MCF 10A (cell line): ENCODE measurements at regions of chr5 and their contacts with region 1.

Region 1: DNA sequence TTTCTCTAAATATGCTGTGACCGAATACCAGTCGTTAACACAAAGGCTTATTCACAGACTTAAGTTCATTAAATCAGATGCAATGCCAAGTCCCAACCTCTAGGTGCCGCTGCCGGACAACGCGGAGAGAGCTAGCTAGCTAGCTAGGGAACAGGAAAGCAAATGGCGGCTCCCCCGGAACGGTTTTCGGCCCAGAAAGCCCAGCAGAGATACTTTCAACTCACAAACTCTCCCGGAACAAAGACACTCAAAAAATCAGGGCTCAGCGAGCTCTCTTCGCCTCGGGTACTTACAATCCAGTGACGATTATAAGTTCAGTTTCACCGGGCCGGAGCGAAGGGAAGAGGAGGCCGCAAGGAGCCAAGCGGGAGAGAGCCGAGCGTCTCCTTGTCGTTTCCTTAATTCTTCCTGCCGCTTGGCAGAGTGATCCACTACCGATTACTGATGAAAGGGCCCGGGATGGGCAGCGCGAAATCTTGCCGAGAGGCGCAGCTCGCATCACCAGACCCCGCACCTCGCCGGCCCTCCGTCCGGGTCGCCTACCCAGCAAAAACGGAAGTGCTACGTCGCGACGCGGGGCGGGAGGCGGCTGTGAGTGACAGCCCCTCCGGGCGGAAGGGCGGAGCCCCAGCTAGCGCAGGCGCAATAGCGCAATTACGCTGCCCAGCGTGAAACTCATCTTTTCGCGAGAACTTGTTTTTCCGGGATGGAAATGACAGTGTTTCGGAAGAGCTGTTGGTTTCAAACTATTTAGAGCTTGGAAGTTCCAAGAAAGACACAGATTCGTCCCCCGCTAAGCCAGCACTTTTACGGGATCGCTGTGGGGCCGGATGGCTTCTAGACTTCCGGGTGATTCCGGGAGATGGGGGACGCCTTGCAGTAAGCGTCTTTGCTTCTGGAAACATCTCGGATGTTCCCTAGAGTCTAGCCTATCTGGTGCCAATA is at the start of gene TAF7:
- DNase-seq: peak; percentile 95
- H3K4me3 Mint-ChIP-seq: peak within 1 kb of the TSS; percentile 99
- H3K27ac Mint-ChIP-seq: peak within 1 kb of the TSS; percentile 100
- H3K4me1 Mint-ChIP-seq: peaks cover 14% of the 10 kb centered on the region
- H3K27me3 Mint-ChIP-seq: no peaks in the 10 kb centered on the region
- CTCF ChIP-seq: peak; percentile 90
- total RNA-seq, gene TAF7: 81.3 and 94.9 TPM in 2 replicates

Region 2: GRCh38 chr5:140806834-140807775 is 513.4 kb before region 1 on chr5 and contains the start of gene PCDHA4:
- CTCF ChIA-PET with region 1: no interaction called
- POLR2A ChIA-PET with region 1: no interaction called
- intact Hi-C with region 1: no loop called
- DNase-seq: peak; percentile 18
- H3K4me3 Mint-ChIP-seq: peak within 1 kb of the TSS; percentile 55
- H3K27ac Mint-ChIP-seq: no peak within 1 kb of the TSS
- H3K4me1 Mint-ChIP-seq: no peaks in the 10 kb centered on the region
- H3K27me3 Mint-ChIP-seq: no peaks in the 10 kb centered on the region
- CTCF ChIP-seq: peak; percentile 38
- total RNA-seq, gene PCDHA4: 0.16 and 0.49 TPM in 2 replicates

Region 3: GRCh38 chr5:141094481-141095262 is 225.8 kb before region 1 on chr5 and contains the start of gene PCDHB2:
- CTCF ChIA-PET with region 1: no interaction called
- POLR2A ChIA-PET with region 1: no interaction called
- intact Hi-C with region 1: no loop called
- DNase-seq: peak; percentile 70
- H3K4me3 Mint-ChIP-seq: peak within 1 kb of the TSS; percentile 74
- H3K27ac Mint-ChIP-seq: peak within 1 kb of the TSS; percentile 89
- H3K4me1 Mint-ChIP-seq: no peaks in the 10 kb centered on the region
- H3K27me3 Mint-ChIP-seq: no peaks in the 10 kb centered on the region
- CTCF ChIP-seq: peak; percentile 58
- total RNA-seq, gene PCDHB2: 2.4 and 2.6 TPM in 2 replicates

Region 4: DNA sequence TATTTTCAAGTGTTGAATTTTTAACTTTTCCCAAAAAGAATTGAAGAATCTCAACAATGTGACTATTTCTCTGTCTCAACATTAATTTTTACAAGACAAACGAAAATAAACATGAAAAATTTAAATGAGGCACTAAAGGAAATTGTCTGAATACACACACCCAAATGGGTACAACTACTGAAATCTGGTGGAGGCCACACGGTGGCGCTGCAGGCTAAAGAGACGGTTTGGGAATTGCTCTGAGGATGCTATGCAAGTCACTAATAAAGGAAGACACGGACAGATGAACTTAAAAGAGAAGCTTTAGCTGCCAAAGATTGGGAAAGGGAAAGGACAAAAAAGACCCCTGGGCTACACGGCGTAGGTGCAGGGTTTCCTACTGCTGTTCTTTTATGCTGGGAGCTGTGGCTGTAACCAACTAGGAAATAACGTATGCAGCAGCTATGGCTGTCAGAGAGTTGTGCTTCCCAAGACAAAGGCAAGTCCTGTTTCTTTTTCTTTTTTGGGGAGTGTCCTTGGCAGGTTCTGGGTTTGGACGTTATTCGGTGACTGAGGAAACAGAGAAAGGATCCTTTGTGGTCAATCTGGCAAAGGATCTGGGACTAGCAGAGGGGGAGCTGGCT is 128.3 kb before region 1 on chr5 and contains the start of gene PCDHB10:
- CTCF ChIA-PET with region 1: interaction called, 10 read pairs
- POLR2A ChIA-PET with region 1: interaction called, 4 read pairs
- intact Hi-C with region 1: no loop called
- DNase-seq: peak; percentile 60
- H3K4me3 Mint-ChIP-seq: peak within 1 kb of the TSS; percentile 81
- H3K27ac Mint-ChIP-seq: no peak within 1 kb of the TSS
- H3K4me1 Mint-ChIP-seq: peaks cover 6% of the 10 kb centered on the region
- H3K27me3 Mint-ChIP-seq: no peaks in the 10 kb centered on the region
- CTCF ChIP-seq: peak; percentile 76
- total RNA-seq, gene PCDHB10: 1.2 and 1.4 TPM in 2 replicates

Region 5: DNA sequence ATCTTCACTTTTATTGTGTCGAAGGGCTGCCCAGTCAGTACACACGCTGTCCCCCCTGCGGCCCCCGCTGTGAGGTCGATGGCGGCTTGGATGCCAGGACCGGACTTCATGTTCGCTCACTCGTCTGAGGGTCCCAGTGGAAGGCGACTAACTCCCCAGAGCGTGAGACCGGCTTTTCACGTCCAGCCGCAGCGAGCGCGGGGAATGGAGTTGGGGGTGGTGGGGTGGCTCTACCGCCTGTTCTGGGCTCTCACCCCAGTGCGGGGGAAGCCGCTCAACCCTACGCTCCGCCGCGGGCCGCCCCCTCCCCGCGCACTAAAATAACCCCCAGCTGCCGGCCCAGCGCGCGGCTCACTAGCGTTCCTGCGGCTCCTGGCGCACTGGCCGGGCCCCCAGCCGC is 16.7 kb before region 1 on chr5 and contains the start of gene SLC25A2:
- CTCF ChIA-PET with region 1: interaction called, 11 read pairs
- POLR2A ChIA-PET with region 1: interaction called, 9 read pairs
- intact Hi-C with region 1: no loop called
- DNase-seq: no peak
- H3K4me3 Mint-ChIP-seq: no peak within 1 kb of the TSS
- H3K27ac Mint-ChIP-seq: no peak within 1 kb of the TSS
- H3K4me1 Mint-ChIP-seq: no peaks in the 10 kb centered on the region
- H3K27me3 Mint-ChIP-seq: no peaks in the 10 kb centered on the region
- CTCF ChIP-seq: no peak
- total RNA-seq, gene SLC25A2: 0.37 and 0.79 TPM in 2 replicates

Region 6: GRCh38 chr5:141369994-141370848 is 49.7 kb after region 1 on chr5 and contains the start of gene PCDHGB3:
- CTCF ChIA-PET with region 1: interaction called, 13 read pairs
- POLR2A ChIA-PET with region 1: interaction called, 3 read pairs
- intact Hi-C with region 1: no loop called
- DNase-seq: peak; percentile 33
- H3K4me3 Mint-ChIP-seq: peak within 1 kb of the TSS; percentile 60
- H3K27ac Mint-ChIP-seq: no peak within 1 kb of the TSS
- H3K4me1 Mint-ChIP-seq: no peaks in the 10 kb centered on the region
- H3K27me3 Mint-ChIP-seq: no peaks in the 10 kb centered on the region
- CTCF ChIP-seq: peak; percentile 24
- total RNA-seq, gene PCDHGB3: 0.33 and 0.56 TPM in 2 replicates

Region 7: GRCh38 chr5:141475625-141476131 is 155.2 kb after region 1 on chr5 and contains the start of gene PCDHGC3:
- CTCF ChIA-PET with region 1: interaction called, 3 read pairs
- POLR2A ChIA-PET with region 1: interaction called, 20 read pairs
- intact Hi-C with region 1: no loop called
- DNase-seq: peak; percentile 98
- H3K4me3 Mint-ChIP-seq: peak within 1 kb of the TSS; percentile 94
- H3K27ac Mint-ChIP-seq: peak within 1 kb of the TSS; percentile 84
- H3K4me1 Mint-ChIP-seq: peaks cover 18% of the 10 kb centered on the region
- H3K27me3 Mint-ChIP-seq: no peaks in the 10 kb centered on the region
- CTCF ChIP-seq: peak; percentile 55
- total RNA-seq, gene PCDHGC3: 17.3 and 31.7 TPM in 2 replicates

Region 8: DNA sequence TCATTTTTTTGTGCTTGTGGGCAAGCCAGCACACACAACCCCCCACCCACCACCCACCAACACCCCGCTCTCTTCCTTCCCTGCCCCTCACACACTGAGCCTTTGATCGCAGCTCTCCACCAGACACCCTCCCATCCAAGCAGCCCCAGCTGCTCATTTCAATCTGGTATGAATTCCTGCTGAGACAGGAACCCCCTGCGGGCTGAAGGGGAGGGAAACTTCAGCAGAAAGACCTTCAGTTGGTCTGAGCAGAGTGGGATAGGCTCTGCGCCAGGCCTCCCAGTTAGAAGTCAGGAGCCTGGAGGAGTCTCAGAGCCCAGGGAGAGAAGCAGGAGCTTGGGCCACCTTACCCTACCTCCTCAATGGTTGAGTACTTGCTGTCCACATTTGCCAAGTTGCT is 175.5 kb after region 1 on chr5:
- CTCF ChIA-PET with region 1: no interaction called
- POLR2A ChIA-PET with region 1: no interaction called
- intact Hi-C with region 1: no loop called
- DNase-seq: no peak
- H3K4me3 Mint-ChIP-seq: no peak overlapping the region
- H3K27ac Mint-ChIP-seq: no peak overlapping the region
- H3K4me1 Mint-ChIP-seq: no peaks in the 10 kb centered on the region
- H3K27me3 Mint-ChIP-seq: no peaks in the 10 kb centered on the region
- CTCF ChIP-seq: no peak

Region 9: GRCh38 chr5:141664732-141665461 is 344.4 kb after region 1 on chr5:
- CTCF ChIA-PET with region 1: no interaction called
- POLR2A ChIA-PET with region 1: no interaction called
- intact Hi-C with region 1: no loop called
- DNase-seq: peak; percentile 83
- H3K4me3 Mint-ChIP-seq: no peak overlapping the region
- H3K27ac Mint-ChIP-seq: no peak overlapping the region
- H3K4me1 Mint-ChIP-seq: peaks cover 4% of the 10 kb centered on the region
- H3K27me3 Mint-ChIP-seq: no peaks in the 10 kb centered on the region
- CTCF ChIP-seq: peak; percentile 94